Activated CD8-positive, alpha-beta T cell treated with anti-CD3 and anti-CD28 coated beads, Interleukin-2, amount 10 ng/mL, durations not matched to agents 7 days and 5 days (primary cell): ENCODE measurements at regions of chr16 and their contacts with region 1.

Region 1: GRCh38 chr16:11051879-11052808 is 107.8 kb downstream of the CLEC16A start:
- DNase-seq: peak; percentile 92
- ATAC-seq: peak; percentile 83
- H3K4me3 Mint-ChIP-seq: peak overlapping the region; percentile 17
- H3K27ac Mint-ChIP-seq: peak overlapping the region; percentile 97
- H3K4me1 Mint-ChIP-seq: peaks cover 98% of the 10 kb centered on the region
- H3K27me3 Mint-ChIP-seq: no peaks in the 10 kb centered on the region

Region 2: GRCh38 chr16:11105038-11105903 is 53.1 kb after region 1 on chr16:
- CTCF ChIA-PET with region 1: interaction called, 15 read pairs
- POLR2A ChIA-PET with region 1: interaction called, 9 read pairs
- DNase-seq: peak; percentile 65
- ATAC-seq: peak; percentile 66
- H3K4me3 Mint-ChIP-seq: peak overlapping the region; percentile 17
- H3K27ac Mint-ChIP-seq: peak overlapping the region; percentile 87
- H3K4me1 Mint-ChIP-seq: peaks cover 88% of the 10 kb centered on the region
- H3K27me3 Mint-ChIP-seq: no peaks in the 10 kb centered on the region